ENCODE measurements at regions of chr10 and their contacts with region 1.

Region 1: DNA sequence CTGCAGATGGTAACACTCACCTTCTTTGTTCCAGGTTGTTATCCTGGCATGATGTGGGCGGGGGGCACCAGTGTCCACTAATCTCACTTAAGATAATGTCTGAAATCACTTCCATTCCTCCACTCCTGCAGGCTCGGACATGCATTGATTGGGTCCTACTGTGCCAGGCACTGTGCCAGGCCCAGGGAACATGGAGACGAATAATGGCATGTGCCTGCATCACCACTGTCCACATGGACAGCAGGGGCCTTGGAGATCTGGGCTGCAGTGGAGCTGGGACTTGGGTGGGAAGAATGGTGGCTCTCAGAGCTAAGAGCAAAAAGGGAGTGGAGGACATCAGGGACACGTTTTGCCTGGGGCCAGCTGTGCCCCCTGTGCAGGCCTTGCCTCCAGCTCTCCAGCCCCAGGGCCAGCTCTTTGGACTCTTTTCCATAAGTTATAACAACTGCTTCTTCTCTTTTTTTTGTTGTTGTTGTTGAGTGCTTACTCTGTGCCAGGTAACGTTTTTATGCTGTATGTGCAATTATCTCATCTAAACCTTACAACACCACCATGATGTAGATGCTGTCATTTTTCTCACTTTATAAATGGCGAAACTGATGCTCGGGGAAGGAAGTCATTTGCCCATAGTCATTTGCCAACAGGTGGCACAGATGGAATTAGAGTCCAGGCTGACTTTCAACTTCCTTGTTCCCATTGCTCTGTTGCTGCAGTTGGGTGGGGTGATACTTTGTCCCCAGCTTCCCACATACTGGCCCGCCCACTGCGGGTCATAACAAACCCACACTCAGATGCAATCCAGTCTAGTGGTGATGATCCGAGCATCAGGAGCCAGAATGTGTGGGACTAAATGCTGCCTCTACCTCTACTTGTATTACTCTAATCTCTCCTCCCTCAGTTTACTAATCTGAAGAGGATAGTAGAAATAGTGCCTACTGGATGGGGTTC is 19.1 kb downstream of the PLPP4 start:
- DNase-seq: peak; percentile 9
- H3K4me3 ChIP-seq: no peak overlapping the region
- H3K27ac ChIP-seq: no peak overlapping the region
- H3K4me1 ChIP-seq: no peaks in the 10 kb centered on the region
- H3K27me3 ChIP-seq: peaks cover 3% of the 10 kb centered on the region
- CTCF ChIP-seq: no peak
- EP300 ChIP-seq: no peak
- POLR2A ChIP-seq: no peak

Region 2: DNA sequence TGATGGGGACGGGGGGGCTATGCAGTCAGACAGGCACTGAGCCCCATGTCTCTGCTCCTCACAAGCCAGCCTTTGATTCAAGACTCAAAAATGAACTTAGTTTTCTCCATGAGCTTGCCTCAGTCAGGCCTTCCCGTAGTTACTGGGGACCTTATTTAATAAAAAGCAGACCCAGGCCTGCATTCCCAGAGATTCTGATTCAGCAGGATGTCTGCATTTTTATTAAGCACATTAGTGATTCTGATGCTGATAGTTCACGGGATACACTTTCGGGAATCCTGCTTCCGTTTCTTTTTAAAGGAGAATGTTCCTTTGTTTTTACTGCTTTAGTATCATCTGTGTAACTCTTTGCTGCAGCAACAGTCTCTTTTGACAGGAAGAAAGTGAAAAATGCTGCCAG is 47.4 kb before region 1 on chr10:
- in situ Hi-C with region 1: no loop called
- intact Hi-C with region 1: loop called (anchors 1 kb)
- DNase-seq: no peak
- H3K4me3 ChIP-seq: no peak overlapping the region
- H3K27ac ChIP-seq: no peak overlapping the region
- H3K4me1 ChIP-seq: no peaks in the 10 kb centered on the region
- H3K27me3 ChIP-seq: peaks cover 3% of the 10 kb centered on the region
- CTCF ChIP-seq: no peak
- EP300 ChIP-seq: no peak
- POLR2A ChIP-seq: no peak

Region 3: DNA sequence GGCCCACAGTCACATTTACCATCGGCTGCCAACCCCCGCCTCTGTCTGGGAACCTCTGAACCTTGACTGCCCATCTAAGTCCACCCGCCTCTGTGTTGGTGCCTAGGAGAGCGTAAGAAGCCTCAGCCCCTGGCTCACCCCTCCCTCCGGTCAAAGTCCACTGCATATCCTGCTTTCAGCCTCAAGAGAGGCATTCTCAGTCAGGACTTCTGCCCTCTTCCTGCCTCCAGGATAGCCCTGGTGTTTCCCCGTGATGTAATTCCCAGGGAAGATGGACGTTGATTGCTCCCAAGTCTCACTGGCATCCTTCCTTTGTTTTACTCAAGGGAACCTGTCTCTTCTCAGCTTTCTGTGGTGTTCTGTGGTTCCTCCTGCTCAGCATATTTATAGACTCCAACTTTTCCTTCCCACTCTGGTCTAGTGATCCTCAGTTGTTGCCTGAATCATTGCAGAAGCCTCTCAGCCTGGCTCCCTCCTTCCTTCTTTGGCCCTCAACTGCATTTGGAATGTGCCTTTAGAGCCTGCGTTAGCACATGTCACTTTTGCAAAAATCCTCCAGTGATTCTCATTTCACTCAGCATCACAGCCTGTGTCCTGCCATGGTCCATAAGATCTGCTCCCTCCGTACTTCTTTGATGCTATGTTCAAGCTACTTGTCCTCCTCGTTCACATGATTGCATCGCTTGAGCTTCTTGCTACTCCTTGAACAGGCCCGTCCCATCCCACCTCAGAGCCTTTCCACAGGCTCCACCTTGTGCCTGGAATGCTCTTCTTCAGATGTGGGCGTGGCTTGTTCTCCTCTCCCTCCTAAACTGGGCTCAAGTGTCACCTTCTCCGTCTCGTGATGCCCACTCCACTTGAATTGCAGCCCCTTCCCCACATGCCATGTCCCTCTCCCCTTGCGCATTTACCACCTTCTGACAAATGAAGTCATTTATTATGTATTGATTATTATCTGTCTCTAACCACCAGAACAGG is 105.1 kb after region 1 on chr10:
- in situ Hi-C with region 1: no loop called
- intact Hi-C with region 1: no loop called
- DNase-seq: peak; percentile 16
- H3K4me3 ChIP-seq: no peak overlapping the region
- H3K27ac ChIP-seq: no peak overlapping the region
- H3K4me1 ChIP-seq: no peaks in the 10 kb centered on the region
- H3K27me3 ChIP-seq: no peaks in the 10 kb centered on the region
- CTCF ChIP-seq: no peak
- EP300 ChIP-seq: no peak
- POLR2A ChIP-seq: no peak

Measured in transverse colon (tissue), 4 donors.